Activated CD4-positive, alpha-beta memory T cell treated with anti-CD3 and anti-CD28 coated beads for 36 hours (primary cell): ENCODE measurements at regions of chr11 and their contacts with region 1.

Region 1: GRCh38 chr11:85854557-85855340 is 434 bp upstream of the CCDC83 start:
- DNase-seq: peak; percentile 96
- H3K4me3 Mint-ChIP-seq: peak overlapping the region; percentile 86
- H3K27ac Mint-ChIP-seq: peak overlapping the region; percentile 87
- H3K4me1 Mint-ChIP-seq: peaks cover 10% of the 10 kb centered on the region
- H3K27me3 Mint-ChIP-seq: no peaks in the 10 kb centered on the region

Region 2: DNA sequence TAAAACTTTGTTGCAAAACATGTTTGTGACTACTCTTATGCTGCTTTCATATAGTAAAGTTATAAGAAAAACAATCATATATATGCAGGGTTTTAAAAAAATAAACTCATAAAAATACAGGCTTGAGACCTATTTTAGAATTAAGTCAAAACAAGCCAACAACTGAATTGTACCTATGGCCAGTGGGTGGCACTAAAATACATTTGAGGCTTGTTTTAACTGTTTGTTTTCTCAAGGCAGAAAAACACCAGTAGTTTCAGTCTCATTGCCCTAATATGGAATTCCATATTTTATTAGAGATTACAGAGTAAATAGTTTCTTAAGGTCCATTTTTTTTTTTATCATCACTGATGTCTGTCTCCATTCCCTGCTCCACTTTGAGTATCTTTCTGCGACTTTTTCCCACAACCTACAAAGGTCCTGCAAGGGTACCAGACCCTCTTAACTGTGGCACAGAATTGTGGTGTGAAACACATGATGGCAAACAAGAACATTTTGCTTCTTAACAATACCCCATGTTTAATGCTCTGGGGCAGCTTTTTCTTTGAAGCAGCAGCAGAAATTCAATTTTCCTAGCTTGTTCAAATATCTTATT is 160.3 kb before region 1 on chr11:
- CTCF ChIA-PET with region 1: interaction called, 15 read pairs
- POLR2A ChIA-PET with region 1: no interaction called
- intact Hi-C with region 1: loop called (anchors 1 kb)
- DNase-seq: no peak
- H3K4me3 Mint-ChIP-seq: no peak overlapping the region
- H3K27ac Mint-ChIP-seq: no peak overlapping the region
- H3K4me1 Mint-ChIP-seq: peaks cover 20% of the 10 kb centered on the region
- H3K27me3 Mint-ChIP-seq: no peaks in the 10 kb centered on the region

Region 3: GRCh38 chr11:85772695-85773094 is 82.1 kb before region 1 on chr11:
- CTCF ChIA-PET with region 1: no interaction called
- POLR2A ChIA-PET with region 1: no interaction called
- intact Hi-C with region 1: no loop called
- DNase-seq: no peak
- H3K4me3 Mint-ChIP-seq: no peak overlapping the region
- H3K27ac Mint-ChIP-seq: no peak overlapping the region
- H3K4me1 Mint-ChIP-seq: peaks cover 40% of the 10 kb centered on the region
- H3K27me3 Mint-ChIP-seq: no peaks in the 10 kb centered on the region

Region 4: DNA sequence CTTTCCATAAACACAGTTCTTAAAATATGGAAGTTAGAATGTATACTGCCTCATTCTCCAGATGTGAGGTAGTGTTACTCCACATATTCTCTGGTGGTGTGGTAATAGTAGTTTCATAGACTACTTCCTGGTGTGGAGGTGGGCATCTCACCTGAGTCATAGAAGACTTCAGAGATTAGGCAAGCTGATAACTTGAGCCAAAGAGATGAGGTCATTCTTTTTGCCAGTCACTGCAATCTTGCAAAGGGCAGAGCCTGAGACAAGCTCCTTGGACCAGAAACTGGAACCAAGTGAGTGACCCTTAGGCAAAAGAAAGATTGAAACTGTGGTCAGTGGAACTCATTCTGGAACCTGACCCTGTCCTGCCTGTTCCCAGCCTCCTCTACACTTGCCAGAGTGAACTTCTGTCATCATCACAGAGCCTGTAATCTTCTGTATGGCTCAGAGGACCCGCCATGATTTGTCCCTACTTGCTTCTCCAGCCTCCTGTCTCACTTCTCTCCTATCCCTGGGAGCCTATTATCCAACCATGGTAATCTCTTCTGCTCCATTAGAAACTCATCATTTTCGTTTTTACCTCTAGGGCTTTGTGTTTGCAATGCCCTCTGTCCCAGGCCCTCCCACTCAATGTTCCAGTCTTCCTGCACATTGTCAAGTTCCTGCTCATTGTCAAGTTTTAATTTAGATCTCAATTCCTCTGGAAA is 10.2 kb before region 1 on chr11:
- CTCF ChIA-PET with region 1: interaction called, 11 read pairs
- POLR2A ChIA-PET with region 1: interaction called, 3 read pairs
- intact Hi-C with region 1: no loop called
- DNase-seq: no peak
- H3K4me3 Mint-ChIP-seq: no peak overlapping the region
- H3K27ac Mint-ChIP-seq: no peak overlapping the region
- H3K4me1 Mint-ChIP-seq: peaks cover 14% of the 10 kb centered on the region
- H3K27me3 Mint-ChIP-seq: no peaks in the 10 kb centered on the region

Region 5: GRCh38 chr11:85983762-85984161 is 129.0 kb after region 1 on chr11:
- CTCF ChIA-PET with region 1: no interaction called
- POLR2A ChIA-PET with region 1: no interaction called
- intact Hi-C with region 1: no loop called
- DNase-seq: no peak
- H3K4me3 Mint-ChIP-seq: no peak overlapping the region
- H3K27ac Mint-ChIP-seq: no peak overlapping the region
- H3K4me1 Mint-ChIP-seq: peaks cover 6% of the 10 kb centered on the region
- H3K27me3 Mint-ChIP-seq: no peaks in the 10 kb centered on the region

Region 6: GRCh38 chr11:86202013-86202336 is 347.2 kb after region 1 on chr11:
- CTCF ChIA-PET with region 1: interaction called, 4 read pairs
- POLR2A ChIA-PET with region 1: no interaction called
- intact Hi-C with region 1: loop called (anchors 5 kb)
- DNase-seq: peak; percentile 38
- H3K4me3 Mint-ChIP-seq: no peak overlapping the region
- H3K27ac Mint-ChIP-seq: no peak overlapping the region
- H3K4me1 Mint-ChIP-seq: peaks cover 5% of the 10 kb centered on the region
- H3K27me3 Mint-ChIP-seq: no peaks in the 10 kb centered on the region

Region 7: GRCh38 chr11:86403458-86403857 is 548.7 kb after region 1 on chr11:
- CTCF ChIA-PET with region 1: no interaction called
- POLR2A ChIA-PET with region 1: no interaction called
- intact Hi-C with region 1: no loop called
- DNase-seq: no peak
- H3K4me3 Mint-ChIP-seq: no peak overlapping the region
- H3K27ac Mint-ChIP-seq: no peak overlapping the region
- H3K4me1 Mint-ChIP-seq: no peaks in the 10 kb centered on the region
- H3K27me3 Mint-ChIP-seq: no peaks in the 10 kb centered on the region

Region 8: DNA sequence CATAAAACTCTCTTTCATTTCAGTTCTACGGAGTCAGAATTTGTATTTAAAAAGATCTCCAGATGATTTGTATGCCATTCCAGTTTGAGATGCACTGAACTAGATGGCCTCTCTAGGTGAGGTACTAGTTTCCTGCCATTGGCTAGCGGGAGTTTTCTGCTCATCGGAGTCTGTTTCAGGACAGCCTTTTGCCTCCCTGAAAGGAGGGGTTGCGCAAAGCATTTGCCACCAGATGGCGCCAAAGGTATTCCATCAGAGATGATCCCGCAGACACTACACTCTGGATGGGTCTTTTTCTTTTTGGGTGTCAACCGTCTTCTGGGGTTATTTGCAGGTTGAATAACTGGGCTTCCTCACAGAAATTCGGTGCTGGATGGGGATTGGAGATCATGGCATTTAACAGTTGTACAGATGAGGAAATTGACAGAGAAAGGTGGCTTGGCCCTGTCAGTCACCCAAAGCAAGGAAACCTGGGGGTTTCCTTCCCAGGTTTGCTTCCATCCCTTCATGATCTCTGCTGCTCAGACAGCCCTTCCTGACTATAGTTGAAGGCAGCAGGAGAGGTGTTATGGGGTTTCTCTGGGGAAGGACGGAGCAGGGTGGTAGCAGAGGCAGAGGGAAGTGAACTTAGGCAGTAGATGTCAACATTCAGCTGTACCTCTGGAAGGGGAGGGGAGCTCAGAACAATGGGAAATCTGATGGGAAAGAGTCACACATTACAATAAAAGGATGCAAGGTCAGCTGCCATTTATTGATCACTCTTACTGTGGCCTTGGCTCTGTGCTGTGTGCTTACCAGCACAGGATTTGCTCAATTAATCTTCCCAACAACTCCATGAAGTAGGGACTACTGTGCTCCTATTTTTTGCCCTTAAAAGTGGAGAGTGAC is 601.5 kb after region 1 on chr11:
- CTCF ChIA-PET with region 1: interaction called, 6 read pairs
- POLR2A ChIA-PET with region 1: no interaction called
- intact Hi-C with region 1: loop called (anchors 10 kb)
- DNase-seq: peak; percentile 88
- H3K4me3 Mint-ChIP-seq: no peak overlapping the region
- H3K27ac Mint-ChIP-seq: no peak overlapping the region
- H3K4me1 Mint-ChIP-seq: peaks cover 16% of the 10 kb centered on the region
- H3K27me3 Mint-ChIP-seq: no peaks in the 10 kb centered on the region

Region 9: DNA sequence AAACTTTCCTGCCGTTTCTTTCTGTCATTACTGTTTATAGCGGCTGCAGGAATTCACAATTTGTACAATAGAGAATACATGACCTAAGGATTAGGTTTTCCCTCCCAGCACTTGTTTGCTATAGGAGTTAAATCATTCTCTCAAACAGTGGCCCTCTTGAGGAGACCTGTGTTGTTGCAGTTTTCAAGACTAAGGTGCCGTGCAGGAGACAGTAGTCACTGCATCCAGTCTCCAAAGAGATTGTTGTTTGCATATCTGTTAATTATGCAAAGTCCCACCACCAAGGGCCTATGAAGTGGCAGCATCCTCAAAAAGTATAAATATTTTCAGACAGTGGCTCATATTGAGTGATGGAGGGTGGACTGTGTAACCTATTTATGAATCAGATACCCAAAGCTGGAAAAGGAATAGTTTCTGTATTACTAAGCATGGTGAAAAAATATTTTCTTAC is 947.9 kb after region 1 on chr11:
- CTCF ChIA-PET with region 1: no interaction called
- POLR2A ChIA-PET with region 1: no interaction called
- intact Hi-C with region 1: loop called (anchors 5 kb)
- DNase-seq: peak; percentile 27
- H3K4me3 Mint-ChIP-seq: no peak overlapping the region
- H3K27ac Mint-ChIP-seq: no peak overlapping the region
- H3K4me1 Mint-ChIP-seq: peaks cover 57% of the 10 kb centered on the region
- H3K27me3 Mint-ChIP-seq: peaks cover 51% of the 10 kb centered on the region